Naive thymus-derived CD8-positive, alpha-beta T cell (primary cell): ENCODE measurements at regions of chr6 and their contacts with region 1.

Region 1: DNA sequence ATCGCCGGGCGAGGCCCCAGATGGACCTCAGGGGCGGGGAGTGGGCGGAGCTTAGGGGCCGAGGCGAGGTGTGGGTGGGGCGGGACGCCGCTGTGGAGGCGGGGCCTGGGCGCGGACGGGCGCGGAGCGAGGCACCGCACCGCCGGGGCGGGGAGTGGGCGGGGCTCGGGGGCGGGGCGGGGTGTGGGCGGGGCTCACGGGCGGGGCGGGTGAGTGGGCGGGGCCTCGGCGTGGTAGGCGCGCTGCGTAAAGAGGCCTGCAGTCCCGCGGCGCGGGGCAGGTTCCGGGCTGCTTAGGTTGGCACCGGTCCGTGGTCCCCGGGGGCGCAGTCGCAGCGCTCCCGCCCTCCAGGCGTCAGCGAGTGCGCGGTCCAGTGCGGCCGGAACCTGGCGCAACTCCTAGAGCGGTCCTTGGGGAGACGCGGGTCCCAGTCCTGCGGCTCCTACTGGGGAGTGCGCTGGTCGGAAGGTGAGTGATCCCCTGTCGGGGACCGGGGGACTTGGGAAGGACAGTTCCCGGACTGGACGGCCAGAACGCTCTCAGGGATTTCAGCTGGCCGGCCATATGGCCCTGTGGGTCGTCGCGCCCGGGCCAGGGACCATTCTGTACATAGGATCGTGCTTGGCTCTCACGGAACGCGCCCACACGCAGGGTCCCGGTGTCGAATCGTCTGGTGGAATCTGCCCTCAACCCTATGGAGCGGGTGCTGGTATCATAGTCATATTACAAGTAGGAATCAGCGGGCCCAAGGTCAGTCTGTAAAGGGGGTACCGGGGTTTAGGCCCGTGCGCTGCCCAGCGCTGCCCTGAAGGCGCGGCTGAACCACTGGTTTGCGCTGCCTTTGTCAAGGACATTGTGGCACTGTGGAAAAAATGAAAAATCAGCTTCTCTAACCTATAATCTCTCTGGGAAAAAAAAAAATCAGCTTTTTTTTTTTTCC is at the start of gene NQO2:
- DNase-seq: peak; percentile 73 to 93 (median 85)
- ATAC-seq: peak; percentile 72 to 79
- H3K4me3 Mint-ChIP-seq: peak within 1 kb of the TSS; percentile 85 to 97 (median 90)
- H3K27ac Mint-ChIP-seq: peak within 1 kb of the TSS; percentile 81 to 97 (median 92)
- H3K4me1 Mint-ChIP-seq: peaks cover 11 to 29% (median 25%) of the 10 kb centered on the region in 4 donors
- H3K27me3 Mint-ChIP-seq: no peaks in the 10 kb centered on the region
- polyA plus RNA-seq, gene NQO2: 37.9 to 48.1 (median 39.0) TPM

Region 2: GRCh38 chr6:2665146-2666070 is 334.5 kb before region 1 on chr6:
- POLR2A ChIA-PET with region 1: no interaction called
- DNase-seq: no peak
- ATAC-seq: no peak
- H3K4me3 Mint-ChIP-seq: no peak overlapping the region
- H3K27ac Mint-ChIP-seq: no peak overlapping the region
- H3K4me1 Mint-ChIP-seq: peaks cover 0 to 1% (median 0%) of the 10 kb centered on the region in 4 donors
- H3K27me3 Mint-ChIP-seq: no peaks in the 10 kb centered on the region

Region 3: DNA sequence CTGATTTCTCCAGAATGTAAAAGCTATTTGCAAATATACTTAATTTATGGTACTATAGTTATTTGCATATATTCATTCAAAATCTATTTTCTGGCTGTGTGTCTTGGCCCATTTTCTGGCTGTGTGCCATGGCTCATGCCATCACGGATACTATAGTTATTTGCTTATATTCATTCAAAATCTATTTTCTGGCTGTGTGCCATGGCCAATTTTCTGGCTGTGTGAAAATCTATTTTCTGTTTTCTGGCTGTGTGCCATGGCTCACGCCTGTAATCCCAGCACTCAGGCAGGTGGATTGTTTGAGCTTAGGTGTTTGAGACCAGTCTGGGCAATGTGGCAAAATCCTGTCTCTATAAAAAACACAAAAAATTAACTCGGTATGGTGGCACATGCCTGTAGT is 39.5 kb after region 1 on chr6:
- POLR2A ChIA-PET with region 1: no interaction called
- DNase-seq: no peak
- ATAC-seq: no peak
- H3K4me3 Mint-ChIP-seq: no peak overlapping the region
- H3K27ac Mint-ChIP-seq: no peak overlapping the region
- H3K4me1 Mint-ChIP-seq: peaks cover 0 to 1% (median 0%) of the 10 kb centered on the region in 4 donors
- H3K27me3 Mint-ChIP-seq: peaks cover 0 to 2% (median 0%) of the 10 kb centered on the region in 5 donors

Region 4: GRCh38 chr6:3052481-3053230 is 52.8 kb after region 1 on chr6:
- POLR2A ChIA-PET with region 1: interaction called, 34 read pairs
- DNase-seq: no peak
- ATAC-seq: no peak
- H3K4me3 Mint-ChIP-seq: peak overlapping the region; percentile 63 to 83 (median 78)
- H3K27ac Mint-ChIP-seq: peak overlapping the region in 7 of 10 donors; percentile 19 to 90 (median 69)
- H3K4me1 Mint-ChIP-seq: peaks cover 6 to 24% (median 19%) of the 10 kb centered on the region in 4 donors
- H3K27me3 Mint-ChIP-seq: peaks cover 0 to 9% (median 0%) of the 10 kb centered on the region in 5 donors